SK-N-SH (cell line): ENCODE measurements at regions of chr3 and their contacts with region 1.

Region 1: DNA sequence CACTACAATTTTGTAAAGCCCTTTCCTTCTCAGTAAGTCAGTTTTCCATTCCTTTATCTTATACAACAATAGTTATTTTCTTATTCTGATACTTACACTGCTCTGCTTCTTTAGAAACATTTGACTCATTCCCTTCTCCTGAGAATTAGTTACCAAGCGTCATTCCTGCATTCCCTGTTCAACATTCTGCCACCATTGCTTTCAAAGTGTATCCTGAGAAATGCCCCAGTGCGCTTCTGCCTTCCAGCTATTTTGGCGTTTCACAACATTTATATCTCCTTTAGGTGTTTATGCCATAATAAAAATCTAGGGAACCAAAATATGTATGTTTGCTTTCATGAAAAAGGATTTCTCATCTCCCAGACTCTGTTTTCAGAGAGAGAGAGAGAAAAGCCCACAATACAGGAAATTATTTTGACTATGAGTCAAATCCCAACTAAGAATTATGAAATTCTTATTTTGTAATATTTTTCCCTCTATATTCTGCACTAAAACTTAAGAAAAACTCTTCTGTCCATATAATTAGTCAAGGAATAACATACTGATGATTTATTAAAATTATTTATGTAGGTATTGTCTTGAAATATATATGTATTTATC is 118.2 kb upstream of the RAP2B start:
- DNase-seq: no peak
- H3K4me3 ChIP-seq: peak overlapping the region in 1 of 2 experiments; percentile 56; a peak in 1 of 4 replicates
- H3K27ac ChIP-seq: peak overlapping the region in 1 of 2 experiments; percentile 72; a peak in 2 of 4 replicates
- H3K4me1 ChIP-seq: peaks cover 0 to 8% of the 10 kb centered on the region in 2 experiments; a peak in 1 of 4 replicates
- H3K27me3 ChIP-seq: no peaks in the 10 kb centered on the region
- CTCF ChIP-seq: no peak
- EP300 ChIP-seq: no peak
- RAD21 ChIP-seq: no peak

Region 2: DNA sequence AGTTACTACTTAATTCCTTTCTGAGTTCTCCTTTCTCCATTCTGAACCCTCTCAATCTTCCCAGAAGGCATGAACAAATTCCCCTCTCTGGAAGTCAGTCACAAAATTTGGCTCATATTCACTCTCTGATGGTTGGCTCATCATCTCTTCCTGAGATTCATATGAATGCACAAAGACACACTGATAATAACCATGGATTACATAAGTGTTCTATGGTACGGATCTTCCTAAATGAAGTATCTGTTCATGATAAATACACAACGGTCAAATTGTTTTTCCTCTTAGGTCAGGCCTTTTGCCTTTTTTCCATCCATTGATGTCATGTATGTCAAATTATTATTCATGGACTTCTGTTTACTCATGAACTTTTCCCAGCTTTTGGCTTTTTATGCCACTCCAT is 46.3 kb before region 1 on chr3:
- CTCF ChIA-PET with region 1: no interaction called
- POLR2A ChIA-PET with region 1: no interaction called
- DNase-seq: no peak
- H3K4me3 ChIP-seq: no peak overlapping the region
- H3K27ac ChIP-seq: no peak overlapping the region
- H3K4me1 ChIP-seq: no peaks in the 10 kb centered on the region
- H3K27me3 ChIP-seq: no peaks in the 10 kb centered on the region; the same call in 1 of the 2 replicates
- CTCF ChIP-seq: no peak
- EP300 ChIP-seq: no peak
- RAD21 ChIP-seq: no peak

Region 3: DNA sequence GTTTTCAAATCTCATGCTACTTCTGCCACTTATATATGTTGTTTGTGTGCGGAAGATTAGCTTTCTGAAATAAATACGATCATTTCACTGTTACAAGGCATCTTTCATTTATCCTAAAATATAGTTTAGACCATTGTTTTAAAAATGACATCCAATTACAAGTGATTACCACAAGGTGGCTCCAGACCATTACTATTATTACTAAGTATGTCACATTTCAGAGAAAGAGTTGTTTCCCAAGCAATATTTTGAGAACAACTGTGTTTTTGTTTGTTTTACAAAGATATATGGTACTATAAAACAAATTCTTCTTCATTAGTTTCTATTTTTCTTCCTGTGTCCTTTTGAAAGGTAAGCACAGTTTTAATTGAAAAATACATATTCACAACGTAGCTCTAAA is 17.8 kb before region 1 on chr3:
- CTCF ChIA-PET with region 1: interaction called, 11 read pairs
- POLR2A ChIA-PET with region 1: no interaction called
- DNase-seq: peak; percentile 9
- H3K4me3 ChIP-seq: no peak overlapping the region; a peak in 1 of 4 replicates
- H3K27ac ChIP-seq: no peak overlapping the region
- H3K4me1 ChIP-seq: 0 out of 4 replicates have a peak, but pooled peaks cover 0 to 8% of the 10 kb centered on the region in 2 experiments
- H3K27me3 ChIP-seq: no peaks in the 10 kb centered on the region; the same call in 1 of the 2 replicates
- CTCF ChIP-seq: peak; percentile 85
- EP300 ChIP-seq: no peak
- RAD21 ChIP-seq: peak; percentile 70

Region 4: DNA sequence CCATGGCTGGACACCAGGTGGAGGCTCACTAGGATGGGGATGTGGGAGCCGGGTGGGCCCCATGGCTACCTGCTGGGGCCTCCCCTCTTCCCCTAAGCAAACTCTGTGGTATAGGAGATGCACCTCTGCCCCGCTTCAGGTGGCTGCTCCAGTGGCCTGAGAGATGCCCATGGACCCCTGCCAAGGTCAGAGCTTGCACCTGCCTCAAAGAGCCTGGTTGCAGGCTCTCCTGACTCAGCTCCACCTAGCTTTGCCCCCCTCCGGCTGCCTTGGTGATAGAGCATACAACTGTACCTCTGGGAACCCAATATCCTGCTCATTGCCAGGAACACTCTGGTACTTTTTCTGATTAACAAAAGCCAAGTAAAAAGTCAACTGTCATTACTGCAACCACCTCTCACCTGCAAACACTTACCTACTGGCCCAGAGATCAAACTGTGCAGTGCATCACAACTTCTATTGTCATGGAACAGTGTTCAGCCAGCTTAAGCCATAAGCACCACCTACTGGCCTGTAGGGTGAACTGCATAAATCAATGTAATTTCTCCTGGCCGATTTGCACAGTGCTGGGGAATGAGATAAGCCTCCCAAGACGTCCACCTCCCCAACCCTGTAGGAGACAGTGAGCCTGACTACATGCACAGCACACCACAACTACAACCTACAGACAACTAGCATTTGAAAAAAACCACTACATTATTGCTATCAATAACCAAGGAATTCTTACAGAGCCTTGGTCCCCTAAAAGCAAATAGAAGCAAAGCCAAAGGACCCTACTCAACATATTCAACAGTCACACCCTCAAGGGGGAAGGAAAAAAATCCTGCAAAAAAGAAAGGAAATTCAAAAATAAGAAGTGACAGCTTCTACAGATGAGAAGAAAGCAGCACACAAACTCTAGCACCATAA is 725.0 kb after region 1 on chr3:
- CTCF ChIA-PET with region 1: interaction called, 17 read pairs
- POLR2A ChIA-PET with region 1: no interaction called
- DNase-seq: peak; percentile 40
- H3K4me3 ChIP-seq: peak overlapping the region in 1 of 2 experiments; percentile 8; a peak in 1 of 4 replicates
- H3K27ac ChIP-seq: no peak overlapping the region
- H3K4me1 ChIP-seq: no peaks in the 10 kb centered on the region
- H3K27me3 ChIP-seq: no peaks in the 10 kb centered on the region
- CTCF ChIP-seq: peak; percentile 80
- EP300 ChIP-seq: no peak
- RAD21 ChIP-seq: peak; percentile 83

Region 5: GRCh38 chr3:153970741-153971347 is 927.0 kb after region 1 on chr3:
- CTCF ChIA-PET with region 1: interaction called, 13 read pairs
- POLR2A ChIA-PET with region 1: no interaction called
- DNase-seq: peak; percentile 5
- H3K4me3 ChIP-seq: no peak overlapping the region
- H3K27ac ChIP-seq: no peak overlapping the region
- H3K4me1 ChIP-seq: no peaks in the 10 kb centered on the region; a peak in 1 of 4 replicates
- H3K27me3 ChIP-seq: no peaks in the 10 kb centered on the region
- CTCF ChIP-seq: peak; percentile 68
- EP300 ChIP-seq: no peak
- RAD21 ChIP-seq: peak; percentile 67